ENCODE measurements at regions of chr6 and their contacts with region 1.

Region 1: GRCh38 chr6:127539272-127539671 is 20.1 kb upstream of the MTCL3 start:
- DNase-seq: peak in 2 of 3 donors; percentile 10 to 49
- H3K4me3 ChIP-seq: no peak overlapping the region
- H3K4me3 Mint-ChIP-seq: no peak overlapping the region
- H3K27ac ChIP-seq: no peak overlapping the region
- H3K27ac Mint-ChIP-seq: no peak overlapping the region
- H3K4me1 ChIP-seq: peaks cover 3 to 7% of the 10 kb centered on the region in 2 donors
- H3K4me1 Mint-ChIP-seq: peaks cover 9% of the 10 kb centered on the region
- H3K27me3 ChIP-seq: peaks cover 0 to 11% of the 10 kb centered on the region in 2 donors
- H3K27me3 Mint-ChIP-seq: peaks cover 6 to 10% (median 7%) of the 10 kb centered on the region in 3 donors
- CTCF ChIP-seq: peak; percentile 57

Region 2: DNA sequence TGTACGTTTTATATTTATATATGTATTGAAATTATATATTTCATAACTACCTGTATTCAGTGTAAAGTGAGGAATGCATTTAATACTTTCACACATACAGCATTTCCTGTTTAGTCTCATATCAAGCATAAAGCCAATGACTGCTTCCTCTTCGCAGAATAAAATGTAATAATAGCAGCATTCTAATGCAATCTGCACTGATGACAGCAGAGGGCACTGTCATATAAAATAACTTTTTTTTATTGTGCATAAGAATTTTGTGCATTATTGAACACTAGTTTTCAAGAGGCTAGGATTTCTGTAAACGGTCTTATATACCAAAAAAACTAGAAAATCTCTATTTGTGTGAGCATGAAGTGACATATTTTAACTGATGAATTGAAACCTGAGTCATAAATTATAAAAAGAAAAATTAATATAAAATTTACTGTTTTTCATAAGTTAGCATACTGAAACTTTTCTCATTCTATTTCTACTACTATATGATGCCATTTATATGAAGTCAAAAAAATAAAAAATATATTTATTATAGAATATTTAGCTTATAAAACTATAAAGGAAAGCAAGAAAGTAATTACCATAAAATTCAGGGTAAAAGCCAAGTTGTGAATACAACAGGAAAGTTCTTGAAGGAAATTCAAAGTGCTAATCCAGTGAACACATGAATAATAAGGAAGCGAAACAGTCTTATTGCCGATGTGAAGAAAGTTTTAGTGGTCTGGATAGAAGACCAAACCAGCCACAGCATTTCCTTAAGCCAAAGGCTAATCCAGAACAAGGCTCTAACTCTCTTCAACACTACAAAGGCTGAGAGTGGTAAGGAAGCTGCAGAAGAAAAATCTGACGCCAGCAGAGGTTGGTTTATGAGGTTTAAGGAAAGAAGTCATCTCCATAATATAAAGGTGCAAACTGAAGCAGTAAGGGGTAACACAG is 236.3 kb before region 1 on chr6:
- intact Hi-C with region 1: loop called (anchors 5 kb)
- DNase-seq: peak; percentile 58 to 85 (median 61)
- H3K4me3 ChIP-seq: peak overlapping the region in 1 of 3 experiments; percentile 10
- H3K4me3 Mint-ChIP-seq: no peak overlapping the region
- H3K27ac ChIP-seq: peak overlapping the region in 1 of 2 donors; percentile 64
- H3K27ac Mint-ChIP-seq: peak overlapping the region in 4 of 7 donors; percentile 38 to 71 (median 60)
- H3K4me1 ChIP-seq: peaks cover 11 to 17% of the 10 kb centered on the region in 2 donors
- H3K4me1 Mint-ChIP-seq: peaks cover 29% of the 10 kb centered on the region
- H3K27me3 ChIP-seq: no peaks in the 10 kb centered on the region
- H3K27me3 Mint-ChIP-seq: no peaks in the 10 kb centered on the region
- CTCF ChIP-seq: peak; percentile 86

Region 3: DNA sequence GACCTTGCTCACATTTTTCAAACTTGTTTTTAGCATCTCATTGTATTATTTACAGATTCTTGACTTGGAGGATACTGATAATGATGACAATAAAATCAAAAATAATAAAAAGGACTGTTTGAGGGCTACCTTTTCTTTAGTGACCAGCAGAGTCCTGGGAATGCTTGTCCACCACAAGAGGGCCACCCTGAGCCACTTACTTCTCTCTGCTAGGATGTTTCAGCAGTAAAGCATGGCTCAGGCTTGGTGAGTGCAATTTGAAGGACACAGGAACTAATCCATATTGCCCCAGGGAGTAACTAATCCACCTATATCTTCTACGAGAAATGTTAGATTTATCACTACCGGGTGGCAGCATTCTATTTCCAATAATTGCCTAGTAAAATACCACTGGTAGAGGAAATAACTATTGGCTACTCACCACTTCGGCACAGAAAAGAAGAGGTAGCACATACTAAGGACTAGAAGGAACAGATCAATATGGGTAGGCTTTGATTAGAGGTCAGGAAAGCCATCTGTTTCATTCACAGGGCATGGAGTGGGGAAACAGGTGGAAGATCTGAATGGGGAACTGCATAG is 74.3 kb before region 1 on chr6:
- intact Hi-C with region 1: loop called (anchors 10 kb)
- DNase-seq: peak; percentile 47 to 66 (median 63)
- H3K4me3 ChIP-seq: no peak overlapping the region
- H3K4me3 Mint-ChIP-seq: no peak overlapping the region
- H3K27ac ChIP-seq: no peak overlapping the region
- H3K27ac Mint-ChIP-seq: no peak overlapping the region
- H3K4me1 ChIP-seq: no peaks in the 10 kb centered on the region
- H3K4me1 Mint-ChIP-seq: no peaks in the 10 kb centered on the region
- H3K27me3 ChIP-seq: no peaks in the 10 kb centered on the region
- H3K27me3 Mint-ChIP-seq: peaks cover 0 to 2% (median 0%) of the 10 kb centered on the region in 3 donors
- CTCF ChIP-seq: peak; percentile 86

Region 4: DNA sequence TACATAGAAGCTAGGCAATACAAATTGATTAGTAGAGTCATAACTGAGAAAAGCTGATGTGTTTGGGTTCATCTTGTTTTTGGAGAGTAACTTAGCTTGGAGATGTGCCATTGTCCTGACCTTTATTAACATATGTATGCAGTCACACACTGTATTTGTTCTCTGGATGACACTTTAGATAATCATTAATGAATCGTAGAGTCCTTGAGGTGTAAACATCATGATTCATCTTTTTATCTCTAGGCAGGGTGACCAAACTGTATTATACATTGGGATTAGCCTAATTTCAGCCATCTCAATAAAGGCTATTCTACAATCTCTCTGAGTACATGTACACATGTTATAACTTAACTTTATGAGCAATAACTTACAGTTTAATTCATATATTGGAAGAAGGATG is 16.6 kb before region 1 on chr6:
- intact Hi-C with region 1: loop called in 1 of 2 experiments (anchors 2 kb)
- DNase-seq: no peak
- H3K4me3 ChIP-seq: no peak overlapping the region
- H3K4me3 Mint-ChIP-seq: no peak overlapping the region
- H3K27ac ChIP-seq: no peak overlapping the region
- H3K27ac Mint-ChIP-seq: no peak overlapping the region
- H3K4me1 ChIP-seq: no peaks in the 10 kb centered on the region
- H3K4me1 Mint-ChIP-seq: peaks cover 14% of the 10 kb centered on the region
- H3K27me3 ChIP-seq: peaks cover 44 to 68% of the 10 kb centered on the region in 2 donors
- H3K27me3 Mint-ChIP-seq: peaks cover 38 to 47% (median 41%) of the 10 kb centered on the region in 3 donors
- CTCF ChIP-seq: no peak